ENCODE measurements at regions of chr16 and their contacts with region 1.

Region 1: GRCh38 chr16:77171745-77172635 is 19.0 kb upstream of the MON1B start:
- DNase-seq: peak; percentile 42 to 67 (median 57)
- H3K4me3 ChIP-seq: no peak overlapping the region
- H3K27ac ChIP-seq: no peak overlapping the region
- H3K4me1 ChIP-seq: no peaks in the 10 kb centered on the region
- H3K27me3 ChIP-seq: peaks cover 0 to 17% (median 5%) of the 10 kb centered on the region in 5 experiments

Region 2: GRCh38 chr16:75801307-75801706 is 1370.7 kb before region 1 on chr16:
- CTCF ChIA-PET with region 1: interaction called, 11 read pairs
- POLR2A ChIA-PET with region 1: no interaction called
- DNase-seq: no peak
- H3K4me3 ChIP-seq: no peak overlapping the region
- H3K27ac ChIP-seq: no peak overlapping the region
- H3K4me1 ChIP-seq: no peaks in the 10 kb centered on the region
- H3K27me3 ChIP-seq: peaks cover 0 to 9% (median 2%) of the 10 kb centered on the region in 5 experiments

Region 3: DNA sequence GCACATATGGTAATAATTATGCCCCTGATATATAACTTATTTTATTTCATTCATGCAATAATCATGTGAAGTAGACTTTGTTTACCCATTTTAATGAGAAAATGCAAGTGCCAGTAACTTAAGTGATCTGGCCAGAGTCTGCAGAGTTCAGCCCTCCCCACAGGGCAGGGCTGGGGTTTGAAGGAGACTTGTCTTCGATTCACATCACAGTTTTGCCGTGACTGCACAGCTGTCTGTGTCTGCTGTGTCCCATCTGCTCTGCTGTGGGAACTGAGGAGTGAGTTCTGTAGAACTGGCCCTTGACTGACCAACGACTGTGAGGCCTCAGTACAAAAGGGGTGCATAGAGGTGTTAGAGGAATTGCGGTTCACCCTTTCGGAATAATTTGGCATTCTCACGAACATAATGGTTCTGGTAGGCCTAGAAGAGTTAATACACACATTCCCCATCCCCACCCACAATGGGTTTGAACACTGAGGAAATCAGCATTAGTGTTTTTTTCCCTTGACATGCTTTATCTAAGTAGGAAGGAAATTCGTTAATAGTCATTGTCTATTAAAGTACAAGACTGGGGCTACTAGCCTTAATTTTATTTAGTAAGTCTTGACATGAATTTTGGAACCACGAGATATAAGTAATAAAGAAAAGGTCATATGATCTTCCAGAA is 94.6 kb before region 1 on chr16:
- CTCF ChIA-PET with region 1: no interaction called
- POLR2A ChIA-PET with region 1: no interaction called
- DNase-seq: no peak
- H3K4me3 ChIP-seq: no peak overlapping the region
- H3K27ac ChIP-seq: no peak overlapping the region
- H3K4me1 ChIP-seq: peaks cover 0 to 7% (median 1%) of the 10 kb centered on the region in 4 experiments
- H3K27me3 ChIP-seq: no peaks in the 10 kb centered on the region

Region 4: DNA sequence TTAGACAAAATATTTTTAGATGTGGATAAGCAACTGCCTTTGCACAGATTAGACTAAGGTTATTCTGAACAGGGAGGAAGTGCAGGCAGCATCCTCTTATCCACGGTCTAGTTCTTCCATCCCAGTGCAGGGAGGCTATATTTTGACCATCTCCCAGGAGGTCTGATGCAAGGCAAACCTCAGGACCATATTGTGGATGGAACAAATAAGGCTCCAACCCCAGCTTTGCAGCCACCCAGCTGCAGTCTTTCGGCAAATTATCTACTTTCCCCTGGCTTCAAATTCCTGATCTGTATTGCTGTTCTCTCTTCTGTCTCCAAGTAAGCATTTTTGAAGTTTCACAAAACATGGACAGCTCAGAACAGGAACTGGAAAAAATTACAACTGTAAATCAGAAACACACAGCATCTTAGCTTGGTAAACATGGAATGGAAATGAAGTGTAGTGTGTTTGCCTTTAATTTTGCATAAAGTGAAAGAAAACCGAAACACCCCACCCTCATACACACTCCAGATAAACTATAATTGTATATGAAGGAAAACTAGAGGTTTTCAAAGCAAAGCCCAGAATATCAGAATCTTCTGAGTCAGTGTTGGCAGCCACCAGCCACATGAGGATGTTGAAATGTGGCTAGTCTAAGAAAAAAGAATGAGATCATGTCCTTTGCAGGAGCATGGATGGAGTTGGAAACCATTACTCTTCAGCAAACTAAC is 14.5 kb before region 1 on chr16:
- CTCF ChIA-PET with region 1: interaction called, 14 read pairs
- POLR2A ChIA-PET with region 1: no interaction called
- DNase-seq: no peak
- H3K4me3 ChIP-seq: no peak overlapping the region
- H3K27ac ChIP-seq: no peak overlapping the region
- H3K4me1 ChIP-seq: no peaks in the 10 kb centered on the region
- H3K27me3 ChIP-seq: peaks cover 0 to 3% (median 2%) of the 10 kb centered on the region in 5 experiments

Region 5: DNA sequence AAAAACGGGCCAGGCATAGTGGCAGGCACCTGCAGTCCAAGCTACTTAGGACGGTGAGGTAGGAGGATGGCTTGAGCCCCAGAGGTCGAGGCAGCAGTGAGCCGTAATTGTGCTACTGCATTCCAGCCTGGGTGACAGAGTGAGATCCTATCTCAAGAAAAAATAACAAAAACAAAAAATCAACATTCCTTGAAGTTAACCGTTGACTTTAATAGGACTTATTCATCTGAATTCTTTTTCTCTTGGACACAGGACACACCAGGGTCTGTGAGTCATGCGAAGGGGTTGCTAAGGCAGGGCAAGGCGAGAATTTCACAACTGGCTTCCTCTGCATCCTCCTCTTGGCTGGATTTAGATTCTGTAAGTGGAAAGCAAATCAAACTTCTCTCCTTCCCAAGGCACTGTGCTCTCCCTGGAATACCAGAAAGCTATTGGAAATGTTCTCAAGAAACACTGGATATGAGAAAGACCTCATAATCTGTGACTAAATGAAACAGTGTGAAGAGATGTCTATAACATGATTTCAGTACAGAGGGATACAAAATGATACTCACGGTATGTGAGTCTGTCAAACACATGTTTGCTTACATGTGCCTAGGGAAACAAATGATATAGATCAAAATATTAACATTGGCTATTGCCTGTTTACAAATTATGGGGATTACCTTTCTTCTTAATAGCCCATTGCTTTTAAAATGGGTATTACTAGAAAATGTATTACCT is 126.8 kb after region 1 on chr16:
- CTCF ChIA-PET with region 1: no interaction called
- POLR2A ChIA-PET with region 1: no interaction called
- DNase-seq: no peak
- H3K4me3 ChIP-seq: no peak overlapping the region
- H3K27ac ChIP-seq: no peak overlapping the region
- H3K4me1 ChIP-seq: no peaks in the 10 kb centered on the region
- H3K27me3 ChIP-seq: no peaks in the 10 kb centered on the region

Measured in common myeloid progenitor, CD34-positive (primary cell).